Activated B cell treated with CpG ODN at 0.5 μM for 24 hours (primary cell): ENCODE measurements at regions of chr4 and their contacts with region 1.

Region 1: DNA sequence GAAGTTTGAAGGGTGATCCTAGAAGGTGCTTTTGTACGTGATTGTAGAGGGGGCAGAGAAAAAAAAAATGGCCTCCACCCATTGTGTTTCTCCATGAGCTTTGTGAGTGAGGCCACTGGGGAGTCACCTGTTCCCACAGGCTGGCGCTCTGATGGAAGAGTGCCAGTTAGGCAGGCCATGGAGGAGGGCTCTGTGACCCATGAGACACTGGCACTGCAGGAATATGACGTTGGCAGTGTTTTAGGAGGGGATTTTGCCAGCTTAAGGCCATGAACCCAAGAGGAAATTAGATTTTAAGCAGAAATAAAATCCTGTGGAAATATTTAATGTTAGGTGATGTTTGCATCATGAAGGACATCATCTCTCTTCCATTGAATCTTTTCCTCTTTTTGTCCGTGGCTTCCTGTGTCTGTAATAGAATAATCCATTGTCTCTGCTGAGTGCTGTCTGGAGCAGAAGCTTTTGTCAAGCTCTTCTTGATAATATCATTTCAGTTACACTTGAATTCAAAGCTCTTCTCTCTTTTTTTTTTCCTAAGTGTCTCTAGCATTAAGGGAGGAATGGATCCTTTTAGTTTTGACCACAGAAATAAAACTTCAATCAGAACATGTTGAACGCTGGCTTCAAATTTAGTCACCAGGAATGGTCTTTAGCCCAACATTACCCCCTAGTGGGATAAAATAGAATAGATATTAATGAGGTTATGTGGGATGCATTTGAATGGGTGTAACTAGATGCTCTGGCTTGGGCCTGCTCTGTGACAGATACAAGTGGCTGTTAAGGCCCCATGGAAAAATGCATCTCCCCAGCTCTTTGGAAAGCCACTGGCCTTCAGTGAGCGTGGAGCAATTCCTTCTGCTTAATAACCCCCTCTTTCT is 41.0 kb upstream of the UCP1 start:
- DNase-seq: no peak
- ATAC-seq: peak; percentile 83
- H3K4me3 Mint-ChIP-seq: no peak overlapping the region
- H3K27ac Mint-ChIP-seq: no peak overlapping the region
- H3K4me1 Mint-ChIP-seq: peaks cover 12% of the 10 kb centered on the region
- H3K27me3 Mint-ChIP-seq: peaks cover 8% of the 10 kb centered on the region
- CTCF ChIP-seq: peak; percentile 49

Region 2: GRCh38 chr4:139603576-139604387 is 1006.0 kb before region 1 on chr4:
- CTCF ChIA-PET with region 1: no interaction called
- POLR2A ChIA-PET with region 1: no interaction called
- intact Hi-C with region 1: loop called (anchors 1 kb)
- DNase-seq: no peak
- ATAC-seq: peak; percentile 45
- H3K4me3 Mint-ChIP-seq: no peak overlapping the region
- H3K27ac Mint-ChIP-seq: no peak overlapping the region
- H3K4me1 Mint-ChIP-seq: peaks cover 9% of the 10 kb centered on the region
- H3K27me3 Mint-ChIP-seq: peaks cover 5% of the 10 kb centered on the region
- CTCF ChIP-seq: no peak

Region 3: DNA sequence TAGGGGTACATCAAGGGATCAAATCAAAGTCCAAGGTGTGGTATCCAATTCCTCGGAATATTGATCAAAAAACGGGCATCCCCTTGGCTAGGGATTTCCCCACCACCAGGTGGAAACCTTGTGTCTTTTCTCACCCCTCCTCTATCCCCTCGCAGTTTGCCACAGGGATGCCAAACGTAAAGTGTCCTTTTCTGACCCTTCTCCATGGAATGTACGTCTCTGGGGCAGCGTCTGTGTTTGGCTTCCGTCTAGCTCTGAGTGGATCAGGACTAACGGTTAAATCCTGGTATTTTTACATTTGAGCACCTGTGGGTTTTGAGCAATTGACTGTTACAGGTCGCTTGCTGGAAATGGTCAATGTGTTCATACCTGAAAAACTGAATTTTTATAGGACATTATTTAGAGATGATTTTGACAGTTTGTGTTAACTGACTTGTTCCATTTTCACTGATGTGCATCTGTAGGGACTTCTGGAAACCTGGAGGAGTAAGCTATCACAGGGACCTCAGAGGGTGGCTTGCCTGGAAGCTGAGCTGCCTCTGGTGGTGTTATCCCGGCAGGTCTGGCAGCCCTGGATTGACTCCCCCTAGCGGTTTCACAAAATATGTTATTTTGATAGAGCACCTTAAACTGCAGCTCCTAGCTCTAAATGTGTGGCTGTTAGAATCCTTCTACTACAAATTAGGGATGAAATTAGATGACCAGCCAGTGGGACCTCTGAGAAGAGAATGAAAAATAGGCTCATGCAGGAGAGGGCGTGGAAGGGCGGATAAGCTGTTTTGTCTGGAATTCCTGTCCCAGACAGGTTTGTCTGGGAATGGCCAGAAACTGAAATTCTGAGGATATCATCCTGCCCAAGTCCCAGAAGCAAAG is 952.9 kb before region 1 on chr4:
- CTCF ChIA-PET with region 1: no interaction called
- POLR2A ChIA-PET with region 1: no interaction called
- intact Hi-C with region 1: loop called (anchors 5 kb)
- DNase-seq: no peak
- ATAC-seq: peak; percentile 79
- H3K4me3 Mint-ChIP-seq: no peak overlapping the region
- H3K27ac Mint-ChIP-seq: no peak overlapping the region
- H3K4me1 Mint-ChIP-seq: peaks cover 5% of the 10 kb centered on the region
- H3K27me3 Mint-ChIP-seq: peaks cover 17% of the 10 kb centered on the region
- CTCF ChIP-seq: peak; percentile 70

Region 4: DNA sequence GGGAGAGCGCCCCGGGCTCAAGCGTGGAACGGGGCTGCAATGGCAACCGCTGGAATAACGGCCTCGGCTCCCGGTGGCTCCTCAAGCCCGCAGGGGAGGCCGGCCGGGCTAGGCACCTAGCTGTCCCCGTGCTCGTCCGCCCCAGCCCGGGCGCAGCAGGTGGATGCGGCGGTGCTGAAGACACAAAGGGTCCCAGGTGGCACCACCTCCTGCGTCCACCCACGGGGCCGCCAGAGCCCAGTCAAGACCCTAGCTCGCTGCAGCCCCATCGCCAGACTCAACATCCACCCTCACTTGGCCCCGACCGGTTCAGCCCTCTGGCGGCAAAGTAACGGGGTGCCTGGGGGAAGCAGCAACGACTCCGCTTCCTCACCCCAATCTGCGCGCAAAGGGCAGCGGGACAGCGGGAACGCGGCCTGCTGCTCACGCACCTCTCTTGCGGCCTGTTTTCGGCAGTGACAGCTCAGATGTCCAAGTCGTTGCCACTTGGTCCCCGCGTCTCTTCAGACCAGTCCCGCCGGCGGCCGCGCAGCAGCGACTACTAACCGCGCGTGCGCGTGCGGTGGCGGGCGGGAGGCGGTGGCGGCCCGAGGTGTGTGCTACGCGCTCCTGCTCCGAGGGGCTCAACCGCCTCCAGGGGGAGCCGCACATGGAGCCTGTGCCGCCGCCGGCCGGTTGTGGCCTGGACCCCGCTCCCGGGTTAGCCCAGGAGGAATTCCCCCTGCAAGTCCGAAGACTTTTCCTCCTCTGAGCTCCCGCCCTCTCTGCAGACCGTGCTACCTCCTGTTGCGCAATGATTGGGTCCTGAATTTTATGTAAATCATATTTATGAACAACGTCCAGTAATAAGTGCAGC is 182.5 kb before region 1 on chr4 and contains the start of gene CLGN:
- CTCF ChIA-PET with region 1: no interaction called
- POLR2A ChIA-PET with region 1: no interaction called
- intact Hi-C with region 1: loop called (anchors 5 kb)
- DNase-seq: peak; percentile 58
- ATAC-seq: peak; percentile 91
- H3K4me3 Mint-ChIP-seq: peak within 1 kb of the TSS; percentile 85
- H3K27ac Mint-ChIP-seq: no peak within 1 kb of the TSS
- H3K4me1 Mint-ChIP-seq: peaks cover 12% of the 10 kb centered on the region
- H3K27me3 Mint-ChIP-seq: peaks cover 48% of the 10 kb centered on the region
- CTCF ChIP-seq: no peak
- total RNA-seq, gene CLGN: not detected in 2 replicates